HCT116 (cell line): ENCODE measurements at regions of chr17 and their contacts with region 1.

Region 1: DNA sequence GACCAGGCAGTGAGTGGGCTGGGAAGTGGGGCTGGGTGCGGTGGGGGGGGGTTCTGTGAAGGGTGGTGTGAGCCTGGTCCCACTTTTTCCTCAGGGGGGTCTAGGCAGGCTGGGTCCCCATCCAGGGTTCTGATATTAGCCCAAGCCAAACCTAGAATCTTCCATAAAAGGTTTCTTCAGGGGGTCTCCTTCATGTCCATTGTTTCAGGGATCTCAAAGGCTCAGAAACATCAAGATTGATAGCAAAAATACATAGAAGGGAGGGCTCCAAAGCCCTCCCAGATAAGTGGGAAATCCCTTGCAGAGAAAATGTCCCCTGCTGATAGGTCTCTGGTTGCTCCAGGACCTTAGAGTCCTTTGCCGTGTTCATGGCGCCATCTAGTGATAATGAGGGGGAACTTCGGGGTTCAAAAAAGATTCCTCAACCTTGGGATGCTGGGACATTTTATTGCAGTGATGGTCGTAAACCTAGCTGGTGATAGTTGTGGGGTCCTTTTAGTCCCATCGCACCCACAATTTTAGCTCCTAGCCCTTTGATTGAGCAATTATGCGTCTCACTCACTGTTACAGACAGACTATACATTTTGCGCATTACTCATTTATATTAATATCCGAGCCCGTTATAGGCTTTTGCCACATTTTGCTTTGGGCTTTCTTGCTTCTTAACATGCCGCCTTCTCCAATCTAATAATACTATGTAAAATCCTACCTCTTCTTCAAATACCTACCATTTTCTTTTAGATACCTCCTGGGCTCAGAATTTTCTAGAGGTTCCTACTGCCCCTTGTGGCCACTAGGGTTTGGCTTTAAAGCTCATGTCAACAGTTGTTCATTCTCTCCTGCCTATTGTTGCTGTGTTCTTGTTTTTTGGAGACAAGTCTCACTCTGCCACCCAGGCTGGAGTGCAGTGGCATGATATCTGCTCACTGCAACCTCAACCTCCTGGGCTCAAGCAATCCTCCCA is 35.1 kb downstream of the IGF2BP1 start:
- DNase-seq: peak; percentile 82
- ATAC-seq: peak; percentile 67
- H3K4me3 ChIP-seq: peak overlapping the region; percentile 6 to 13; a peak in 2 of 4 replicates
- H3K27ac ChIP-seq: peak overlapping the region; percentile 25; the same call in 1 of the 2 replicates
- H3K4me1 ChIP-seq: peaks cover 12 to 25% of the 10 kb centered on the region in 2 experiments
- H3K27me3 ChIP-seq: no peaks in the 10 kb centered on the region
- CTCF ChIP-seq: peak; percentile 79 to 98 (median 92)
- POLR2A ChIP-seq: no peak
- RAD21 ChIP-seq: peak; percentile 100

Region 2: DNA sequence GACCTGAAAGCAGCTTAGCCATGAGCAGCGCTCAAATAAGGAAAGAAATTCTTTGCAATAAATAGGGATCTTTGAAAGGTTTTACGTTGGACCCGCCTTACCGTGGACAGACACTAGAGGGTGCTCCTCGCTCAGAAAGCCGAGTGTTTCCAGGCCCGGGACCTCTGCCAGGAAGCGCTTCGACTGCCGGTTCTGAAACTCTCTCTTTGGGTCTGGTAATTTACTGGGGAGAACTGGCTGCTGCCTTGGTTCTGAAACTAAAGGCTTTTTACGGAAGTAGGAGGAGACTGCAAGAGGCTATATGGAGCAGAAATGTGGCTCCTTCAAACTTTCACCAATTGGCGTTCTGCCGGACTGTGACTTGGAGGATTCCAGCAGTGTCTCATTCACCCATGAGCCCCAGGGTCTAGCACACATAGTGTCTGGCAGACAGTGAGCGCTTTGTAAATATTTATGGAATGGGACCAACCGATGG is 360.5 kb before region 1 on chr17:
- CTCF ChIA-PET with region 1: interaction called, 11 read pairs
- POLR2A ChIA-PET with region 1: no interaction called
- RAD21 ChIA-PET with region 1: interaction called in 1 of 2 experiments, 5 read pairs
- intact Hi-C with region 1: loop called (anchors 2 kb)
- DNase-seq: peak; percentile 59
- ATAC-seq: peak; percentile 87
- H3K4me3 ChIP-seq: peak overlapping the region; percentile 21 to 52
- H3K27ac ChIP-seq: no peak overlapping the region
- H3K4me1 ChIP-seq: peaks cover 0 to 10% of the 10 kb centered on the region in 2 experiments; a peak in 3 of 4 replicates
- H3K27me3 ChIP-seq: no peaks in the 10 kb centered on the region
- CTCF ChIP-seq: peak; percentile 92 to 99 (median 98)
- POLR2A ChIP-seq: no peak
- RAD21 ChIP-seq: peak; percentile 94

Region 3: DNA sequence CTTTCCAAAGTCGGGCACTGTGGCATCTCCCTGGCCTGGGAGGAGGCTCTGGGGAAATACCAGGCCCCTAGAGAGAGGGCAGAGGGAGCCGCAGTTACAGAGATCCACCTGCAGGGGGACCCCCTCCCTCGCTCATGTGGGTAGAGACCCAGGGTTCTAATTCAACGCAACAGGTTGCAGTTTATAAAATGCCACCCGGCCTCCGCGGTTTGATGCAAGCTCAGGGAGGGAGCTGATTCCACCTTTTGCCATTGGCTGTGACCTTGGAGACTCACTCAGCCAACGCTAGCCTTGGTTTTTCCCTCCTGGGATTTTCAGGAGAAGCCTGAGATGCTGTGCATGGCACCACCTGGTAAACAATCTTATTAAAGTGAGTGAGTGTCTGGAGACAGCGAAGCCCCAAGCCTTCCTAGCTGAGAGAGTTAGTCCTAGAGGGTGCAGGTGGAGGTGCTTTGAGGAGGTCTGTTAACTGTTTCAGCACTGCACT is 227.3 kb before region 1 on chr17:
- CTCF ChIA-PET with region 1: interaction called, 30 read pairs
- POLR2A ChIA-PET with region 1: no interaction called
- RAD21 ChIA-PET with region 1: interaction called, 3 to 5 read pairs
- intact Hi-C with region 1: loop called (anchors 2 kb)
- DNase-seq: peak; percentile 77
- ATAC-seq: peak; percentile 100
- H3K4me3 ChIP-seq: peak overlapping the region in 1 of 2 experiments; percentile 4; a peak in 2 of 4 replicates
- H3K27ac ChIP-seq: no peak overlapping the region
- H3K4me1 ChIP-seq: peaks cover 4 to 11% of the 10 kb centered on the region in 2 experiments; a peak in 3 of 4 replicates
- H3K27me3 ChIP-seq: no peaks in the 10 kb centered on the region
- CTCF ChIP-seq: peak; percentile 97 to 100 (median 100)
- POLR2A ChIP-seq: no peak
- RAD21 ChIP-seq: peak; percentile 99

Region 4: DNA sequence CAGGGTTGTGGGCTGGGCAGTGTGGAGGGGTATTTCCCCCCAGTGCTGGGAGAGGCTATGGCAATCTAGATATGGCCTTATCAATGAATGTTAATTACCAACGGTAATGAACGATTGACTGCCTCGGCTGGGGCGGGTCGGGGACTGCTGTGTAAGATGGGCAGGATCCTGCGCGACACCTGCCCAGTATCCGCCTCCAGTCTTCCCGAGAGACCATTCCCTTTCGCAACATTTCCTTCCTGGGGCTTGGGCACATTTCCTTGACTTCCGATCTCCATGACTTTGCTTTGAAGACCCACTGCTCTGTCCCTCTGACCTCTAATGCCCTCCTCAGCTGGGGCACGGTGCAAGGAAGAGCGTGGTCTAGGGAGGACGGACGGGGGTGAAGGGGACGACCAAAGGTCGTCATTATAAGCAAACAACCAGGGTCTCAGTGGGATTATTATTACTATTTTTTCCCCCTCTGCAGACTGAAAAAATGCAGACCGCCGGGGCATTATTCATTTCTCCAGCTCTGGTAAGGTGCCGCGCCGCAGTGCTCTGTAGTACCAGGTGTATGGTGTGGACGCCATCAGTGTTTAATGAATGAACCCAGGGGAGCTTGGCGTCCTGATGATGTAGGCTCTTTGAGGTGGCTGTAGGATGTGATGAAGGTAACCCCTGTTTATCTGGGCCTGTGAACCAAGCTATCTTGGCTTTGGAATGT is 139.2 kb before region 1 on chr17:
- CTCF ChIA-PET with region 1: interaction called, 18 read pairs
- POLR2A ChIA-PET with region 1: interaction called, 8 read pairs
- RAD21 ChIA-PET with region 1: interaction called in 1 of 2 experiments, 4 read pairs
- intact Hi-C with region 1: loop called (anchors 2 kb)
- DNase-seq: no peak
- ATAC-seq: no peak
- H3K4me3 ChIP-seq: peak overlapping the region; percentile 82 to 88
- H3K27ac ChIP-seq: peak overlapping the region; percentile 73
- H3K4me1 ChIP-seq: peaks cover 11 to 26% of the 10 kb centered on the region in 2 experiments; a peak in 3 of 4 replicates
- H3K27me3 ChIP-seq: no peaks in the 10 kb centered on the region
- CTCF ChIP-seq: no peak
- POLR2A ChIP-seq: no peak
- RAD21 ChIP-seq: no peak

Region 5: GRCh38 chr17:48944519-48945260 is 87.6 kb before region 1 on chr17 and contains the start of gene SNF8:
- CTCF ChIA-PET with region 1: interaction called, 19 read pairs
- POLR2A ChIA-PET with region 1: interaction called, 8 read pairs
- RAD21 ChIA-PET with region 1: interaction called, 3 to 4 read pairs
- intact Hi-C with region 1: loop called (anchors 1 kb)
- DNase-seq: peak; percentile 80
- ATAC-seq: peak; percentile 91
- H3K4me3 ChIP-seq: peak within 1 kb of the TSS; percentile 68 to 72
- H3K27ac ChIP-seq: peak within 1 kb of the TSS; percentile 92
- H3K4me1 ChIP-seq: peaks cover 9 to 17% of the 10 kb centered on the region in 2 experiments
- H3K27me3 ChIP-seq: no peaks in the 10 kb centered on the region
- CTCF ChIP-seq: no peak
- POLR2A ChIP-seq: peak; percentile 68
- RAD21 ChIP-seq: no peak; the same call in 1 of the 2 replicates
- total RNA-seq, gene SNF8: 178 TPM

Region 6: DNA sequence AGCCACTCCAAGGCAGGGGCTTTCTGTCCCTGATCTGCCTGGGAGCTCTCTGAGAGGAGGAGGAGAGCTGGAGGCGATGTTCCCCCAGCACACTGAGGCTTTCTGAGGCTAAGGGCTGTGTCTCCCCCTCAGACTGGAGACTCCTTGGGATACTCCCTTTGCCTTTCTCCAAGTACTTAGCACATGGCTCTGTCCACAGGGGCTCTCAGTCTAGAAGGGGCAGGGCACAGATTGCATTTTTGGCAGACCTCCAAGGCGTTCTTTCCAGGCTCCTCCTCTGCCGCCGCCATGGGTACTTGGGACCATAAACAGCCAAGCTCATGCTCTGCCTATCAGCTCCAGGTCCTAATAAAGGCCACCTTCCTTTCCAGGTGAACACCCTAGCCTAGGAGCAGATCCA is 62.0 kb before region 1 on chr17:
- CTCF ChIA-PET with region 1: interaction called, 12 read pairs
- POLR2A ChIA-PET with region 1: no interaction called
- RAD21 ChIA-PET with region 1: interaction called in 1 of 2 experiments, 5 read pairs
- intact Hi-C with region 1: no loop called
- DNase-seq: no peak
- ATAC-seq: no peak
- H3K4me3 ChIP-seq: no peak overlapping the region
- H3K27ac ChIP-seq: no peak overlapping the region
- H3K4me1 ChIP-seq: peaks cover 46 to 50% of the 10 kb centered on the region in 2 experiments
- H3K27me3 ChIP-seq: no peaks in the 10 kb centered on the region
- CTCF ChIP-seq: no peak
- POLR2A ChIP-seq: no peak
- RAD21 ChIP-seq: no peak